Right ventricle myocardium superior (tissue), 1 donor: ENCODE measurements at regions of chr3 and their contacts with region 1.

Region 1: GRCh38 chr3:71064288-71064955 is 519.1 kb downstream of the FOXP1 start:
- DNase-seq: peak; percentile 45
- ATAC-seq: peak; percentile 47

Region 2: DNA sequence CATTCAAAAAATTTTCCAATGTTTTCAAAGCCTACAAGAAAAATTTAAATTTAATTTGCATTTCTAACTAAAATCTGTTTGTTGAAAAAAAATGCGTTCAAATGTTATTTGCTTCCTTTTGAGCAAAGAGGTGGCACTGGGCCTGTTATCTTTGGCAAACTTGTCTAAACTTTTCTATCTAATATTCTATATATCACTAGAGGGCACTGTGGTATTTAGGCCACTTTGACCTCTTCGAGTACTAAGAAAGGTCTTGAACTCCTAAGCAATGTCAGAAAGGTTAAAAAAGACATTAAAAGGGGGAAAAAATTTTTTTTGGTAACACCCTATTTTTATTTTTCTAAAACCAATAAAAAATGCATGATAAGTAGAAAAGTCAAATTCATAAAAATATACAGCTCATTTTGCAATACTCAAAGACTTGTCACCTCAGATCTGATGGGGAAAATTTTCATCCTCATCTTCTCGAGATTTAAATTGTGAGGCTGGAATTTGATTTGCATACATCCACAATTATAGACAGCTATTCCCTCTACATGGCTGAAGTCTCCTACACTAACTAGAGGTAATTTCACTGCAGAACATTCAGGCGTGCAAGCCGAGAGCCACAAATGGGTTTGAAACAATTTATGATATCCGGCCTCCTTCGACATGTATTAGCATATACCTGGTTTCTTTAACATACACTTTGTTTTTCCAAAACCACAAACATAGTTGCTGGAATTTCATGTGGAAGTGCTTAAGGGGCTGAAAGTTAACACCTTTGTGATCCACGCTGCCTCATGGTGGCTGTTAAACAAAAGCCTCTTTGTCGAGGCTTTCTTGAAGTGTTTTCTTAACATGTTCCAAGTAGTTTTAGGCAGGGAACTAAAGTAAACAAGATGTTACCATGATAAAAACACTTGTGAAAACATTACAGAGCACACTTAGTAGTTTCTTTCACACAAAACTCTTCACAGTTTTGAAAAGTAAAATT is 57.3 kb before region 1 on chr3:
- intact Hi-C with region 1: loop called (anchors 5 kb)
- DNase-seq: no peak
- ATAC-seq: peak; percentile 87

Region 3: DNA sequence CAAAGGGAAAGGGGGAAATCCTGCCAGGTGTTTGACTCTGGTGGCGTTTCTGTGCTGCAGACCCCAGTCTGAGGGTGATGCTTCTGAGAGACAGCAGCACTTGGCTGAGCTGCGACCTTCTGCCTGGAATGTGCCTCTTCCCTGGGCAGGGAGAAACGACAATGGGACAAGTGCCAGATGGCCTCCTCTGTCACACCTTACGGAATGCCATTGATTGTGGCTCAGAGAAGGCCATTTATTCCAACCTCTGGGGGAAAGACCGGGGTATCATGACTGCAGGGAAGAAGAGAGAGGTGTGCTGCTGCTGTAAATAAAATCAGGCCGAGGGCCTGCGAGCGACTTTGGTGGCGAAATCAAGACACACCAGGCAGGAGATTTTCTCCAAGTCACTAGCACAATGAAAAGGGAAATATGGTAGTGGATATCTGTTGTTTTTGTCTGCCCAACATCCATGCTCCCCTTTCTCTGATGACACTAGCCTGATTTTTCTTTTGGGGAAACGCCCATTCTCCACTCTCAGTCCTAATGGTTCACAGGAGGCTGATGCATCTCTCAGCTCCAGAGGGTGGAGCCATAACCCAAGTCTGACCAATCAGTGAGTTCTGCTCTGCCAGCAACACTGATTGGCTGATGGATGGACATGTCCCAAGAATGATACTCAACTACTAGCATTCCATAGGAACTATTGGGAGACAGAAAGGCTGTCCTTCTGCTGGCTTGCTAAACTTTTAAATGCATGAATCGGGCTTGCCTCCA is 183.0 kb after region 1 on chr3:
- intact Hi-C with region 1: loop called (anchors 10 kb)
- DNase-seq: no peak
- ATAC-seq: peak; percentile 16